Ovary (tissue), 10 donors: ENCODE measurements at regions of chr6 and their contacts with region 1.

Region 1: DNA sequence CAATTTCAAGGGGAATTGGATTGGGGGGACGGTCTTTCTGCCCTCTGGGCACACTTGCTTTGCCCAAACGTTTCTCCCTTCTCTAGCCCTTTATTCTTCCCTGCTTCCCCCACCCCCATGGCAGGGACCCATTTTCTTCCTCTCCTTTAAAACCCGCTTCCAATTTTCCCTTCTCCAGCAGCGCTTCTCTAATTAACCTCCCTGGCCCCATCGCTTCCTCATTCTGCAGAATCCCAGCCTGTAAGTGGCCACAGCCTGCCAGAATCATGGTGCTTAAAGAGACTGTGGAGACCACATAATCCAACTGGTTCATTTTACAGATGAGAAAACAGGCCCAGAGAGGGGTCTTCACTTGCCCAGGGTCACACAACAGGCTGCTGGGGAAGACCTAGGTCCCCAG is 61.4 kb downstream of the CPNE5 start:
- DNase-seq: no peak
- H3K4me3 ChIP-seq: no peak overlapping the region
- H3K27ac ChIP-seq: no peak overlapping the region
- H3K4me1 ChIP-seq: no peaks in the 10 kb centered on the region
- H3K27me3 ChIP-seq: no peaks in the 10 kb centered on the region
- CTCF ChIP-seq: no peak
- EP300 ChIP-seq: no peak
- POLR2A ChIP-seq: no peak

Region 2: GRCh38 chr6:35945650-35946025 is 832.2 kb before region 1 on chr6:
- intact Hi-C with region 1: no loop called
- DNase-seq: no peak
- H3K4me3 ChIP-seq: no peak overlapping the region
- H3K27ac ChIP-seq: no peak overlapping the region
- H3K4me1 ChIP-seq: no peaks in the 10 kb centered on the region
- H3K27me3 ChIP-seq: no peaks in the 10 kb centered on the region
- CTCF ChIP-seq: no peak
- EP300 ChIP-seq: no peak
- POLR2A ChIP-seq: no peak

Region 3: DNA sequence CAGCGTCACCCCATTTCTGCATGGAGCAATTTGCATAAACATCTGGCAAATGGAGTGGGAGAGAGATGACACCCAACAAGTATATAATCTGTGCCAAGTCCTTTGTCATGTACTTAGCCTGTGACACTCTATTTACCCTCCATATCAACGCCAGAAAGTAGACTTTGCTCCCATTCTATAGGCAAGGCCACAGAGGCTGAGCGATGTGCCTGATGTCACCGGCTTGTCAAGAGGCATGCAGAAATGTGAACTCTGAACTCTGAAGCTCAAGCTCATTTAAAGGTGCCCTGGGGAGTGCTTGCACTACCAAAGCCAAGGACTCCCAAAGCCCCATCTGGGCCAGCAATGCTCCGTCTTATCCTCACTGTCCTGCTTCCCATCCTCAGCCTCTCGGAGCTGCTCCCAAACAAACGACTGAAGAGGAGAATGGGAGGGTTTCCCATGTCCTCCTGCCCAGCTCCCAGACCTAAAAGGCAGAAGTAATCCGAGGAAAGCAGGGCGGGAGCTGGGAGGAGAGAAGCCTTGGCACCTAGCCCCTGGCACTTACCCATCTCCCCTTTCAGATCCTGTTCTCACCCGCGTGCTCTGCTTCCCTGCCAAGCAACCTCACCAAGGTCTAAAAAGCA is 52.2 kb after region 1 on chr6:
- intact Hi-C with region 1: loop called in 1 of 4 experiments (anchors 5 kb)
- DNase-seq: peak; percentile 78 to 89 (median 83)
- H3K4me3 ChIP-seq: no peak overlapping the region
- H3K27ac ChIP-seq: no peak overlapping the region
- H3K4me1 ChIP-seq: peaks cover 8% of the 10 kb centered on the region
- H3K27me3 ChIP-seq: no peaks in the 10 kb centered on the region
- CTCF ChIP-seq: no peak
- EP300 ChIP-seq: no peak
- POLR2A ChIP-seq: no peak